ENCODE measurements at regions of chr15 and their contacts with region 1.

Region 1: GRCh38 chr15:96264801-96265515 is 65.5 kb upstream of the NR2F2 start:
- DNase-seq: peak; percentile 84 to 91
- H3K4me3 ChIP-seq: no peak overlapping the region
- H3K4me3 Mint-ChIP-seq: peak overlapping the region; percentile 68
- H3K27ac Mint-ChIP-seq: peak overlapping the region; percentile 98
- H3K4me1 ChIP-seq: peaks cover 78% of the 10 kb centered on the region
- H3K4me1 Mint-ChIP-seq: peaks cover 50% of the 10 kb centered on the region
- H3K27me3 ChIP-seq: no peaks in the 10 kb centered on the region
- H3K27me3 Mint-ChIP-seq: no peaks in the 10 kb centered on the region
- CTCF ChIP-seq: no peak

Region 2: GRCh38 chr15:95922431-95922830 is 342.5 kb before region 1 on chr15:
- CTCF ChIA-PET with region 1: no interaction called
- POLR2A ChIA-PET with region 1: no interaction called
- intact Hi-C with region 1: loop called (anchors 2 kb)
- DNase-seq: peak; percentile 52 to 57
- H3K4me3 ChIP-seq: no peak overlapping the region
- H3K4me3 Mint-ChIP-seq: no peak overlapping the region
- H3K27ac Mint-ChIP-seq: no peak overlapping the region
- H3K4me1 ChIP-seq: no peaks in the 10 kb centered on the region
- H3K4me1 Mint-ChIP-seq: peaks cover 7% of the 10 kb centered on the region
- H3K27me3 ChIP-seq: no peaks in the 10 kb centered on the region
- H3K27me3 Mint-ChIP-seq: no peaks in the 10 kb centered on the region
- CTCF ChIP-seq: peak in 1 of 2 experiments; percentile 33

Region 3: GRCh38 chr15:95970326-95970725 is 294.6 kb before region 1 on chr15:
- CTCF ChIA-PET with region 1: no interaction called
- POLR2A ChIA-PET with region 1: no interaction called
- intact Hi-C with region 1: no loop called
- DNase-seq: no peak
- H3K4me3 ChIP-seq: no peak overlapping the region
- H3K4me3 Mint-ChIP-seq: no peak overlapping the region
- H3K27ac Mint-ChIP-seq: no peak overlapping the region
- H3K4me1 ChIP-seq: no peaks in the 10 kb centered on the region
- H3K4me1 Mint-ChIP-seq: peaks cover under 1% of the 10 kb centered on the region
- H3K27me3 ChIP-seq: no peaks in the 10 kb centered on the region
- H3K27me3 Mint-ChIP-seq: no peaks in the 10 kb centered on the region
- CTCF ChIP-seq: no peak

Region 4: DNA sequence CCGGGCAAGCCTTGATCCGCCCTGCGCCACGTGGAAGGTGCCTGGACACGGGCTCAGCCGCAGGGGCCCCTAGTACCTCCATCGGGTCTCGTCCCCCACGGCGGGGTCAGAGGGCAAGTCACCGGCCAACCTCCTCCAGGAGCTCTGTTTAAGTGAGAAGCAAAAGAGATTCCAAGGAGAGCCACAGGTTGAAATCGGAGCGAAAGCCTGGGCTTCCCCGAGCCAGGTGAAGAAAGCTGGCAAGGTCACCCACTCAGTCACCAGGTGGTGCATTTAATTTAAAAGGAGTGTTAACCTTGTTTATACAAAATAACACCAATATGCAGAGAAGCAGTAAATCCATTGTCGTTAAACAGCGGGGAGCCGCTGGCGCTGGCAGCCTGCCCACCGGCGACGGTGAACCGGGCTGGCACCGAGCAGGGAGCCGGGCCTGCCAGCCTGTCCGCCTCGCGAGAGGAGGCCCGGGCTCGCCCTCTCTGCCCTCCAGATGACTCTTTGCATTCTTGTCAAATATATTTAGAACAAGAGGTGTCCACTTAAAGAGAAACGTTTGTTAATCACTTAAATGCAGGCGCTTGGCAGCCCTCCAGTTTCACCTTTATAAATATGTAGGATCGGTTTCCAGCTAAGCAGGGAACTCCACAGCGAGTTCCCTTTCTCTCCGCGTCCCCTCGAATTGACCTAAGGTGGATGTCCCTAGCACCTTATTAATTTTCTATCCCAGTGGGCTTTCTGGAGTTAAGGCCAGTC is 211.8 kb before region 1 on chr15:
- CTCF ChIA-PET with region 1: no interaction called
- POLR2A ChIA-PET with region 1: no interaction called
- intact Hi-C with region 1: loop called (anchors 5 kb)
- DNase-seq: peak; percentile 9 to 42
- H3K4me3 ChIP-seq: no peak overlapping the region
- H3K4me3 Mint-ChIP-seq: peak overlapping the region; percentile 66
- H3K27ac Mint-ChIP-seq: peak overlapping the region; percentile 86
- H3K4me1 ChIP-seq: peaks cover 56% of the 10 kb centered on the region
- H3K4me1 Mint-ChIP-seq: peaks cover 20% of the 10 kb centered on the region
- H3K27me3 ChIP-seq: no peaks in the 10 kb centered on the region
- H3K27me3 Mint-ChIP-seq: no peaks in the 10 kb centered on the region
- CTCF ChIP-seq: no peak

Region 5: GRCh38 chr15:96122077-96122681 is 142.8 kb before region 1 on chr15:
- CTCF ChIA-PET with region 1: no interaction called
- POLR2A ChIA-PET with region 1: no interaction called
- intact Hi-C with region 1: loop called (anchors 2 kb)
- DNase-seq: no peak
- H3K4me3 ChIP-seq: no peak overlapping the region
- H3K4me3 Mint-ChIP-seq: peak overlapping the region; percentile 23
- H3K27ac Mint-ChIP-seq: peak overlapping the region; percentile 66
- H3K4me1 ChIP-seq: peaks cover 49% of the 10 kb centered on the region
- H3K4me1 Mint-ChIP-seq: peaks cover 54% of the 10 kb centered on the region
- H3K27me3 ChIP-seq: no peaks in the 10 kb centered on the region
- H3K27me3 Mint-ChIP-seq: no peaks in the 10 kb centered on the region
- CTCF ChIP-seq: no peak

Region 6: GRCh38 chr15:96209285-96209735 is 55.6 kb before region 1 on chr15:
- CTCF ChIA-PET with region 1: no interaction called
- POLR2A ChIA-PET with region 1: interaction called, 3 read pairs
- intact Hi-C with region 1: loop called (anchors 1 kb)
- DNase-seq: peak; percentile 85 to 92
- H3K4me3 ChIP-seq: no peak overlapping the region
- H3K4me3 Mint-ChIP-seq: peak overlapping the region; percentile 52
- H3K27ac Mint-ChIP-seq: peak overlapping the region; percentile 93
- H3K4me1 ChIP-seq: peaks cover 35% of the 10 kb centered on the region
- H3K4me1 Mint-ChIP-seq: peaks cover 24% of the 10 kb centered on the region
- H3K27me3 ChIP-seq: no peaks in the 10 kb centered on the region
- H3K27me3 Mint-ChIP-seq: no peaks in the 10 kb centered on the region
- CTCF ChIP-seq: no peak

Region 7: GRCh38 chr15:96645796-96646195 is 380.8 kb after region 1 on chr15:
- CTCF ChIA-PET with region 1: no interaction called
- POLR2A ChIA-PET with region 1: no interaction called
- intact Hi-C with region 1: no loop called
- DNase-seq: no peak
- H3K4me3 ChIP-seq: no peak overlapping the region
- H3K4me3 Mint-ChIP-seq: no peak overlapping the region
- H3K27ac Mint-ChIP-seq: no peak overlapping the region
- H3K4me1 ChIP-seq: no peaks in the 10 kb centered on the region
- H3K4me1 Mint-ChIP-seq: no peaks in the 10 kb centered on the region
- H3K27me3 ChIP-seq: no peaks in the 10 kb centered on the region; the same call in 1 of the 2 replicates
- H3K27me3 Mint-ChIP-seq: peaks cover 6% of the 10 kb centered on the region
- CTCF ChIP-seq: no peak